ENCODE measurements at regions of chr11 and their contacts with region 1.

Region 1: GRCh38 chr11:20022363-20023081 is 137.8 kb downstream of the DBX1 start:
- DNase-seq: peak; percentile 61
- ATAC-seq: peak; percentile 40
- H3K4me3 Mint-ChIP-seq: peak overlapping the region; percentile 72
- H3K27ac Mint-ChIP-seq: peak overlapping the region; percentile 96
- H3K4me1 Mint-ChIP-seq: peaks cover 47% of the 10 kb centered on the region
- H3K27me3 Mint-ChIP-seq: no peaks in the 10 kb centered on the region
- CTCF ChIP-seq: no peak

Region 2: DNA sequence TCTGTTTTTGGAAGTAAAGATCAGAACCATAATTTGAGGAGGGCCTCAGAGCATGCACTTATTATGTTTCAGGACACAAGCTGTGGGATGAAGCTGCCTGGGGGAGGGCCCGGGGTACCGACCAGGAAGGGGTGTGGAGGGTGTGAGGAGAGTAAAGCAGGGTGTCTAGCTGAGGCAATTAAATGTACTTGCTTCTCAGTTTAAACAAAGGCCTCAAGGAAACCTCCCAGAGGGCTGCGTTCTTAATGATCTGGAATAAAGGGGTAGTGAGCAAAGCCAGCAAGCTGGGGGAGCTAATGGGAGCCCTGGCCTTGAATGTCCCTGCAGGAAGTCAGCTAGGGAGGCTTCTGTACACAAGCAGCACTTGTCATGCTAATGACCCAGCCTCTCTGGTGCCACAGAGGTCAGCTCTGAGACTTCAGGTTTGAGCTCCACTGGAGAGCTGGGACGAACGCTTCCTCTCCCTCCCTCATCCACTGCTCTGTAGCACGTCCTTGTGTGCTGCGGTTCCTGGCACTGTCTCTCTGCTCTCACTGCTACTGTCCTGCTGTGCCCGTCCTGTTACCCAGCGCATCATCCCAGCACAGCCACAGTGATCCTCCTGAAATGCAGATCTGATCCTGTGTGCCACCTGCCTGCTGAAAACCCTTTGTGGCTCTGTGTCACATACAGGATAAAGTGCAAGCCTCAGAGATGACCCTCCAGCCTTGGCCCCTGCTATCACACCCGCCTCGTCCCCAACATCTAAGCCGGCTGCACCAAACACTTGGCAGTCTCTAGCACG is 22.0 kb before region 1 on chr11:
- CTCF ChIA-PET with region 1: interaction called, 23 read pairs
- POLR2A ChIA-PET with region 1: interaction called, 8 read pairs
- DNase-seq: peak; percentile 83
- ATAC-seq: peak; percentile 96
- H3K4me3 Mint-ChIP-seq: peak overlapping the region; percentile 40
- H3K27ac Mint-ChIP-seq: peak overlapping the region; percentile 89
- H3K4me1 Mint-ChIP-seq: peaks cover 58% of the 10 kb centered on the region
- H3K27me3 Mint-ChIP-seq: peaks cover 76% of the 10 kb centered on the region
- CTCF ChIP-seq: no peak

Region 3: DNA sequence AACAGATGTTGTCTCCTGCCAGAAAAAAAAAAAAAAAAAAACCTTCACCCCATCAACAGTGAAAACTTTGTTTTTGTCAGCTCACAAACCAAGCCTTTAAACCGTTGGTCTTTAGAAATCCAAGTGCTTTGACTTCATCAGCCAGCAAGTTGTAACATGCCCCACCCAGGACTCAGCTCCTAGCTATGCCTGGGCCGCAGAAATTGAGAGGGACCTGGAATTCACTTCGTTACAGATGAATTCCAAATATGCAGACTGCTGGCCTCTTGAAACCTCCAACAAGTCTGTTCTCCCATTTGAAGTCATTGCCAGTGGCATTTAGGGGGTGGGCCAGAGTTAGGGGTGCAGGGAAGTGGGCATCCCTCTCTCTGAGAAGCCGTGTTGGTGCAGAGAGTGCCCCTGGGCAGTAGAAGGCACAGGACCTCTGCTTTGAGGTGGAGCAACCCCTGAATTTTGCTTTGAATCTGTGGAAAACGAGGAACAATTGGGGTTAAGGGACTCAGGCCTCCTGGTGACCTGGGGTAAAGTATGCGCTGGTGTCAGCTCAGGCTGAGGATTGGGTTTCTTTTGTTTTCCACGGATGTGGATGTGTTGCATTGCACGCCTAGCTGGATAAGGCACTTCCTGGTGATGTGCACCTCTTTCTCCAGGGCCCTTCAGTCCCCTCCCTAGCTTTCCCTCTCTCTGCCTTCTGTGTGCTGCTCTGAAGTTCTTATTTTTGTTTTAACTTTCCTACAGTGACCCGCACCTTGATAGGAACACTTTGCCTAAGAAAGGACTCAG is 28.2 kb after region 1 on chr11:
- CTCF ChIA-PET with region 1: interaction called, 18 read pairs
- POLR2A ChIA-PET with region 1: interaction called, 3 read pairs
- DNase-seq: peak; percentile 24
- ATAC-seq: peak; percentile 75
- H3K4me3 Mint-ChIP-seq: peak overlapping the region; percentile 25
- H3K27ac Mint-ChIP-seq: peak overlapping the region; percentile 81
- H3K4me1 Mint-ChIP-seq: peaks cover 35% of the 10 kb centered on the region
- H3K27me3 Mint-ChIP-seq: no peaks in the 10 kb centered on the region
- CTCF ChIP-seq: no peak

Region 4: GRCh38 chr11:20303343-20303965 is 280.9 kb after region 1 on chr11:
- CTCF ChIA-PET with region 1: no interaction called
- POLR2A ChIA-PET with region 1: no interaction called
- DNase-seq: no peak
- ATAC-seq: no peak
- H3K4me3 Mint-ChIP-seq: no peak overlapping the region
- H3K27ac Mint-ChIP-seq: no peak overlapping the region; the same call in 1 of the 2 replicates
- H3K4me1 Mint-ChIP-seq: peaks cover 7% of the 10 kb centered on the region
- H3K27me3 Mint-ChIP-seq: peaks cover 6% of the 10 kb centered on the region
- CTCF ChIP-seq: no peak

Measured in WTC11 (cell line).